ENCODE measurements at regions of chr16 and their contacts with region 1.

Region 1: DNA sequence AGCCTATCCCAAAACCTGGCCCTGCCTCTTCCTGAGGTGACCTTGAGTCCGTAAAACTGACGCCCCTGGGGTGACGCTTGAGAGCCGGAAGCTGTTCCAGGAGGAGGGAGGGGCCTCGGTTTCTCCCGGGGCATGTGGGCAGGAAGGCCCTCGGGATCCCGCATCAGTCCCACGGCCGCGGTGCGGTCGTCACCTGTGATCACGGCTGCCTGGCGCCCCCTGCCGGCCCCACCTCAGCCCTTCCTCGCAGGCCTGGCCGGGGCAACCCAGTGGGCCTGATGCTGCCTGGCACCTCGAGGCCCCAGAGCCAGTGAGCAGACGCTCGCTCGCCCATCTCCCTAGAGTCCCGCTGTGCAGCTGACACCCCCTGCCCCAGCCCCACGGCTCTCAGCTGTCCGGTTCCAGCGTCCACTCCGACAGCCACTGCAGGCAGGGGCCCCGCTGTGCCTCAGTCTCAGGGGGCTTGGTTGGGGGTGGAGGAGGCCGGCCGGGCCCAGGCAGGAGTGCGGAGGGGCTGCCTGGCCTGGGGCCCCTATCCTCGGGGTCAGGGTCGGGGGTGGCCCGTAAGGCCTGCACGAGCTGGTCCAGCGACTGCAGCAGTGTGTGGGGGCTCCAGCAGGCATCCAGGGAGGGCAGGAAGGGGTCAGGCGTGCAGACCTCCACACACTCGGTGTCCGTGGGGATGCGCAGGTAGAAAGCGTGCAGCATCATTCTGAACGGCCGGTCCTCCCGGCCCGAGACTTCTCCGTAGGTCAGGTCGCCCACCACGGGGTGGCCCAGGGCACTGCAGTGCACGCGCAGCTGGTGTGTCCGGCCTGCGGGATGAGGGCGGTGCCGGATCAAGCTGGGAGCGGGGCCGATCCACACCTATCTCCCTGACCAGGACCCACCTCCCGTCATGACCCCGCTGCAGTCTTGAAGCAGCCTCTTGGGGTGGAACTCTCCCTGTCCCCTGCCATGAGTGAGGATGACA is 2.3 kb downstream of the RPUSD1 start:
- DNase-seq: peak; percentile 63
- H3K4me3 Mint-ChIP-seq: peak overlapping the region; percentile 55
- H3K27ac Mint-ChIP-seq: no peak overlapping the region
- H3K4me1 Mint-ChIP-seq: peaks cover 14% of the 10 kb centered on the region
- H3K27me3 Mint-ChIP-seq: no peaks in the 10 kb centered on the region

Region 2: GRCh38 chr16:711548-712320 is 74.1 kb before region 1 on chr16:
- CTCF ChIA-PET with region 1: interaction called, 10 read pairs
- POLR2A ChIA-PET with region 1: interaction called, 3 read pairs
- DNase-seq: peak; percentile 78
- H3K4me3 Mint-ChIP-seq: no peak overlapping the region
- H3K27ac Mint-ChIP-seq: no peak overlapping the region
- H3K4me1 Mint-ChIP-seq: peaks cover 8% of the 10 kb centered on the region
- H3K27me3 Mint-ChIP-seq: peaks cover 45% of the 10 kb centered on the region

Measured in activated CD4-positive, alpha-beta T cell treated with anti-CD3 and anti-CD28 coated beads, Interleukin-2, amount 10 ng/mL, durations not matched to agents 7 days and 5 days (primary cell).